ENCODE measurements at regions of chr21 and their contacts with region 1.

Region 1: DNA sequence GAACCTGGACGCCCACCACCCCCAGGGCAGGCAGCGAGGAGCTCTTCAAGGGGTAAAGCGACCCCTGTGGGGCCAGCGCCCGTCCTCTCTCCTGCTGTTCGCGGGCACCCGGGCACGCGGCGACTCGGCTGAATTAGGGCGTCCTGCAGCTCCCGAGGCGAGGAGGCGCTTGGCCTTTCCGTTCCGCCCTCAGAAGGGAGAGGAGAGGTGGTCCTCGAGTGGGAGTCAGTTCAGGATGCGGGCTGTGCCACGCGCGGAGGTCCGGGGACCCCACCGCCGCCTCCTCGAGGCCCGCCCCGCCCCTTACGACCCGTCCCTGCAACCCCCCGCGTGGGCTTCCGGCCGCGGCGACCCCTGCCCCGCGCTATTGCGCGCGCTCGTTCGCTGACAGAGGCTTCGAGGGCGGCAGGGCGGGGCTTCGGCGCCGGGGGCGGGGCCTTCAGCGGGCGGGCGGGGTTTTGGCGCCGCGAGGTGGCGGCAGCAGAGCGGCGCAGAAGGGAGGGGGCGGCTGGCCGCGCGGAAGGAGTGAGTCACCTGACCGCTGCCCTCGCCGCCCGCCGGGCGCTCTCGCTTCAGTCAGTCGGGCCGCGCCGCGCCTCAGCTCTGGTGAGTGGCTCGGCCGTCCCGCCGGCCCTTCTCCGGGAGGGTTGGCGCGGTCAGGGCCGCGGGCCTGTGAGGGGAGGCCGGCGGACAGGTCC is at the start of gene BACH1:
- DNase-seq: peak; percentile 78
- H3K4me3 Mint-ChIP-seq: peak within 1 kb of the TSS; percentile 91
- H3K27ac Mint-ChIP-seq: peak within 1 kb of the TSS; percentile 88
- H3K4me1 Mint-ChIP-seq: peaks cover 59% of the 10 kb centered on the region
- H3K27me3 Mint-ChIP-seq: peaks cover 4% of the 10 kb centered on the region
- total RNA-seq, gene BACH1: 22.7 and 23.1 TPM in 2 replicates

Region 2: DNA sequence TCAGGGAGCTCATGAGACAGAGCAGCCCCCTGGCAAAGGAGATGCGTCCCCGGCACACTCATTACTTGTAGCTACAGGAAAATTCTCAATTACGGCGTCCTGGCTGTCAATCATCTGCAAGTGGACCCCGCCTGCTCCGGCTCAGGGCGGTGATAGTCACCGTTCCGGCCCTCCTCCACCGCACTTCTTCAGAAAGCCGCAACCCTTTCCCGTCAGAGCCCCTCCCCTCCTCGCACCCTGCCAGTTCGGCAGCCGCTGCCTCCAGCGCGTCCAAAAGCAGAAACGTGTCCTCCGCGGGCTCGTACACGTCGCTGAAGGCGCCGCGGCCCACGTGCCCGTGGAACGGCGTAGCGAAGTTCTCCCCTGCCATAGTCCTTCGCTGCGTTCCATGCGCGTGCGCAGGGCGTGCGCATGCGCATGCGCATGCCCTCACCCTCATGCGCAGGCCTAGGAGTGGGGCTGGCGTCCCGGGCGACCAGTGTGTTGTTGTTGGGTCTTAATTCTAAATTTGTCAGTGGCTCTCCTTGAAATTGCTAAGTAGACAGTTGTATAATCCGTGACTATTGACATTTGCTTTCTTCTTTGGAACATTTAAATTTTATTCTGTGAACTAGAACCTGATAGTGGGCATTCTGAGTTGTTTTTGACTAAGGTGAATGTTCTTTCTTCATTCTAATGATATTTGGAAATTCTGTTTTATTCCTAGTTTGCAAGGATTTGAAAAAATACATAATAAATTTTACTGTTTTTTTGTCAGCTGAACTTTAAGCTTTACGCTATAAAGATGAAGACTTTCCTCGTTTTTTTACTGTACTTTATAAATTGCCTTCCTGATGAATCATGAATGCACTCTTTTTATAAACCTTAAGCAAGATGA is 413.3 kb before region 1 on chr21:
- intact Hi-C with region 1: loop called (anchors 1 kb)
- DNase-seq: peak; percentile 95
- H3K4me3 Mint-ChIP-seq: peak overlapping the region; percentile 95
- H3K27ac Mint-ChIP-seq: peak overlapping the region; percentile 99
- H3K4me1 Mint-ChIP-seq: peaks cover 21% of the 10 kb centered on the region
- H3K27me3 Mint-ChIP-seq: peaks cover 5% of the 10 kb centered on the region

Region 3: GRCh38 chr21:29073222-29074006 is 225.1 kb before region 1 on chr21 and contains the start of gene CCT8:
- intact Hi-C with region 1: loop called (anchors 2 kb)
- DNase-seq: peak; percentile 98
- H3K4me3 Mint-ChIP-seq: peak within 1 kb of the TSS; percentile 99
- H3K27ac Mint-ChIP-seq: peak within 1 kb of the TSS; percentile 98
- H3K4me1 Mint-ChIP-seq: peaks cover 58% of the 10 kb centered on the region
- H3K27me3 Mint-ChIP-seq: no peaks in the 10 kb centered on the region
- total RNA-seq, gene CCT8: 394 and 400 TPM in 2 replicates

Region 4: GRCh38 chr21:29154270-29154669 is 144.2 kb before region 1 on chr21:
- intact Hi-C with region 1: no loop called
- DNase-seq: no peak
- H3K4me3 Mint-ChIP-seq: no peak overlapping the region
- H3K27ac Mint-ChIP-seq: no peak overlapping the region
- H3K4me1 Mint-ChIP-seq: peaks cover 1% of the 10 kb centered on the region
- H3K27me3 Mint-ChIP-seq: peaks cover 14% of the 10 kb centered on the region

Region 5: GRCh38 chr21:29164325-29164942 is 134.1 kb before region 1 on chr21:
- intact Hi-C with region 1: loop called (anchors 1 kb)
- DNase-seq: no peak
- H3K4me3 Mint-ChIP-seq: no peak overlapping the region
- H3K27ac Mint-ChIP-seq: no peak overlapping the region
- H3K4me1 Mint-ChIP-seq: peaks cover 7% of the 10 kb centered on the region
- H3K27me3 Mint-ChIP-seq: peaks cover 6% of the 10 kb centered on the region

Region 6: GRCh38 chr21:29181799-29182470 is 116.6 kb before region 1 on chr21:
- intact Hi-C with region 1: no loop called
- DNase-seq: no peak
- H3K4me3 Mint-ChIP-seq: peak overlapping the region; percentile 51
- H3K27ac Mint-ChIP-seq: peak overlapping the region; percentile 57
- H3K4me1 Mint-ChIP-seq: peaks cover 27% of the 10 kb centered on the region
- H3K27me3 Mint-ChIP-seq: no peaks in the 10 kb centered on the region

Region 7: GRCh38 chr21:29219165-29219770 is 79.2 kb before region 1 on chr21:
- intact Hi-C with region 1: no loop called
- DNase-seq: no peak
- H3K4me3 Mint-ChIP-seq: no peak overlapping the region
- H3K27ac Mint-ChIP-seq: no peak overlapping the region
- H3K4me1 Mint-ChIP-seq: no peaks in the 10 kb centered on the region
- H3K27me3 Mint-ChIP-seq: no peaks in the 10 kb centered on the region

Region 8: GRCh38 chr21:29245104-29245643 is 53.3 kb before region 1 on chr21:
- intact Hi-C with region 1: loop called (anchors 1 kb)
- DNase-seq: no peak
- H3K4me3 Mint-ChIP-seq: no peak overlapping the region
- H3K27ac Mint-ChIP-seq: peak overlapping the region; percentile 49
- H3K4me1 Mint-ChIP-seq: peaks cover 9% of the 10 kb centered on the region
- H3K27me3 Mint-ChIP-seq: peaks cover 36% of the 10 kb centered on the region

Region 9: GRCh38 chr21:30718239-30718909 is 1419.9 kb after region 1 on chr21 and contains the start of gene KRTAP21-3:
- intact Hi-C with region 1: loop called (anchors 10 kb)
- DNase-seq: no peak
- H3K4me3 Mint-ChIP-seq: peak within 1 kb of the TSS; percentile 7
- H3K27ac Mint-ChIP-seq: peak within 1 kb of the TSS; percentile 75
- H3K4me1 Mint-ChIP-seq: peaks cover 29% of the 10 kb centered on the region
- H3K27me3 Mint-ChIP-seq: peaks cover 2% of the 10 kb centered on the region
- total RNA-seq, gene KRTAP21-3: not detected in 2 replicates